ENCODE measurements at regions of chr17 and their contacts with region 1.

Region 1: DNA sequence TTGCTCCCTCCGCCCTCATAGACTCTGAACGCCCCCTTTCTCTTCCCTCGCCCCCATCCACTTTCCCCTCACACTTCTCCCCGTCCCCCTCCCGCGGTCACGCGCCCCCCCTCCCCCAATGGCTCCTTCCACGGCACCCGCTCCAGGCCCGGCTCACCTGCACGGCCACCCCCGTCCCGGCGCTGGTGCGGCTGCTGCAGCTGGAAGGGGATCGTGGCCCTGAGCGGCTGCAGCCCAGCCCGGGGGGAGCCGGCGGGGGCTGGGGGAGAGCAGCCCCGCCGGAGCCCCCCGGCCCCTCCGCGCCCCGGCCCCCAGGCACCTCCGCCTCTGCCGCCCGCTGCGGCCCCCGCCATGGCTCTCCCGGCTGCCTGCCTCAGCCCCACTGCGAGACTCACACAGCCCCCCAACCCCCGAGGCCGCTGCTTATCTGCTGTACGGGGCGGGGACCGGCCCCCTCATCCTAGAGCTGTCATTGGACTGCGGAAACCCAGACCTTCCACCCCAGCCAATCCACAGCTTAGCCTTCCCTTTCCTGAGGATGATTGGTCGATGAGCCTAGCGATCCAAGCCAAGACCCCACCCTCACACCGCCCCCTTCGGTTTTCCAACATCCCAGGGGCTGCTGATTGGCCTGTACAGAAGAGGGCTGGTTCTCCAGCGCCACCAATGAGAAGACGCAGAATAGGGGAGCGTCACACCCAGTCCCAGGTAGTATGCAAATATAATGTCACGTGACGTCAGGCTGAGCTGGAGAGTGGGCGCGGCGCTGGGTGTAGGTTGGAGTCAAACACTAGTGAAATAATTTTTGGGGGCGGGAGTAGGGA is at the start of gene FAM117A:
- DNase-seq: peak; percentile 100
- ATAC-seq: peak; percentile 98
- H3K4me3 ChIP-seq: peak within 1 kb of the TSS; percentile 73 to 97 (median 90)
- H3K27ac ChIP-seq: peak within 1 kb of the TSS; percentile 47
- H3K4me1 ChIP-seq: peaks cover 24% of the 10 kb centered on the region
- H3K27me3 ChIP-seq: no peaks in the 10 kb centered on the region
- CTCF ChIP-seq: no peak
- EP300 ChIP-seq: no peak
- POLR2A ChIP-seq: peak; percentile 93 to 97
- RAD21 ChIP-seq: no peak
- total RNA-seq, gene FAM117A: 12.1 and 12.3 TPM in 2 replicates

Region 2: DNA sequence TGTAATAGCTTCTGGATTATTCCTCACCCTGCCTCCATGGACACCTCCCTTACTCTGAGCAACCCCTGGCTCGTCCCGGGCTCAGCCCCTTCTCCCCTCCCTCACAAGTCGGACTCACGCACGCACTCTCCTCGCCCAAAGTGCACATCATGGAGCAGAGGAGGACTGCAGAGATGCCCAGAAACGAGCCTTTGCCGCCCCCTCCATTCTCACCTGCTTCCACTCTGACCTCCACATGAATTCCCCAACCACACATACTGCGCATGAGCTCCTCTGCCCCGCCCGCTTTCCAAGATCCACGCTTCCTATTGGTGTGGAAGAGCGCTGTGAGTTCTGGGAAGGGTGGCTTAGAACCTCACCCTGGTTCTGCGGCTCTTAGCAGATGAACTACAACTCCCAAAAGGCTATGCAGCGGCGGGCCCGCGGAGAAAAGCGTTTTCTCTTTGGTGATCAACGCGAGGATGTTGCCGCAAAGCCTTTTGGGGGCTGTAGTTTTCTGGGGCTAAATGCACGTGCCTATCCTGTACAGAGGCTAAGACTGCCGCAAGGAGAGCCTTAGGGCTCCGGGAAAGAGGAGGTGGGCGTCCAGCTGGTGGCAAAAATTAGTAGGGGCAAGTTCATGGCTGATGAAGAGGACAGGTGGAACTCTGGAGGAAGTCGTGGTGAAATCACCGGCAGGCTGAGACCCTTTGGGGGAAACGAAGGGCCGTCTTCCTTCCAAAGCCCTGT is 349.2 kb before region 1 on chr17 and contains the start of gene PHB1:
- CTCF ChIA-PET with region 1: no interaction called
- POLR2A ChIA-PET with region 1: interaction called, 12 read pairs
- in situ Hi-C with region 1: no loop called
- intact Hi-C with region 1: no loop called
- DNase-seq: peak; percentile 99
- ATAC-seq: peak; percentile 99
- H3K4me3 ChIP-seq: peak within 1 kb of the TSS; percentile 87 to 94 (median 92)
- H3K27ac ChIP-seq: peak within 1 kb of the TSS; percentile 63
- H3K4me1 ChIP-seq: peaks cover 55% of the 10 kb centered on the region
- H3K27me3 ChIP-seq: no peaks in the 10 kb centered on the region; a peak in 1 of 5 replicates
- CTCF ChIP-seq: no peak
- EP300 ChIP-seq: peak in 1 of 2 experiments; percentile 49; a peak in 1 of 4 replicates
- POLR2A ChIP-seq: peak; percentile 69 to 95
- RAD21 ChIP-seq: no peak
- total RNA-seq, gene PHB1: 515 and 623 TPM in 2 replicates

Region 3: DNA sequence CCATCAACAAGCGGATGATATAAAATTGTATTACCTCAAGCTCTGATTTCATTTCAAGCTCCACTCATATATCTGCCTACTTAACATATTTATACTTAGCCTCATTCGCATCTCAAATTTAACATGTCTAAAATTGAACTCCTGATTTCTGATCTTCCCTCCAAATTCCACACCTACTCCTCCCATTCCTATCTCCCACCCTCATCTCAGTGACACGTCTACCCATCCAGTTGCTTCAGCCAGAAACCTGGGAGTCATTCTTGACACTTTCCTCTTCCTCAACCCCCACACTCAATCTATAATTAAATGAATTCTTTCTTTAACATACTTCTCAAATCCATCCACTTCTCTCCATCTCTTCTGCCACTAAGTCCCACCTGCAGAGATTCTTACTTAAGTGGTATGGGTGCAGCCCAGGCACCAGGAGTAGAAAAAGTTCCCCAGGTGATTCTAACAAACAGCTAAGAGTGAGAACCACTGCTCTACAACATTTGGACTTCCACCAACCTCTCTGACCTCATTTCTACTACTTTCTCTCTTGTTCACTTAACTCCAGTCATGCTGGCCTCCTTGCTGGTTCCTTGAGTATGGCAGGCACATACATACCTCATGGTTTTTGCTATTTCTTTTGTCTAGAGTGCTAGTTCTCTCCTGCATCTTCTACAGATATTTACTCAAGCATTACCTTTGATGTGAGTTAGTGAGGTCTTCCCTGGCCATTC is 104.1 kb before region 1 on chr17:
- CTCF ChIA-PET with region 1: no interaction called
- POLR2A ChIA-PET with region 1: no interaction called
- in situ Hi-C with region 1: no loop called
- intact Hi-C with region 1: no loop called
- DNase-seq: no peak
- ATAC-seq: no peak
- H3K4me3 ChIP-seq: no peak overlapping the region
- H3K27ac ChIP-seq: no peak overlapping the region
- H3K4me1 ChIP-seq: no peaks in the 10 kb centered on the region
- H3K27me3 ChIP-seq: no peaks in the 10 kb centered on the region
- CTCF ChIP-seq: no peak
- EP300 ChIP-seq: no peak
- POLR2A ChIP-seq: no peak
- RAD21 ChIP-seq: no peak

Region 4: GRCh38 chr17:49677933-49678847 is 85.8 kb before region 1 on chr17 and contains the start of gene SPOP:
- CTCF ChIA-PET with region 1: no interaction called
- POLR2A ChIA-PET with region 1: interaction called, 14 read pairs
- in situ Hi-C with region 1: no loop called
- intact Hi-C with region 1: no loop called
- DNase-seq: peak; percentile 98
- ATAC-seq: peak; percentile 88
- H3K4me3 ChIP-seq: peak within 1 kb of the TSS; percentile 68 to 77 (median 74)
- H3K27ac ChIP-seq: peak within 1 kb of the TSS; percentile 73
- H3K4me1 ChIP-seq: peaks cover 49% of the 10 kb centered on the region
- H3K27me3 ChIP-seq: no peaks in the 10 kb centered on the region; a peak in 1 of 5 replicates
- CTCF ChIP-seq: peak; percentile 19; the same call in 1 of the 2 replicates
- EP300 ChIP-seq: no peak
- POLR2A ChIP-seq: peak; percentile 56 to 81
- RAD21 ChIP-seq: 0 out of 2 replicates have a peak, but pooled peaks have one; percentile 19
- total RNA-seq, gene SPOP: 60.8 and 79.4 TPM in 2 replicates

Region 5: GRCh38 chr17:49741009-49741691 is 22.8 kb before region 1 on chr17:
- CTCF ChIA-PET with region 1: no interaction called
- POLR2A ChIA-PET with region 1: interaction called, 83 read pairs
- in situ Hi-C with region 1: no loop called
- intact Hi-C with region 1: no loop called
- DNase-seq: no peak
- ATAC-seq: no peak
- H3K4me3 ChIP-seq: no peak overlapping the region
- H3K27ac ChIP-seq: no peak overlapping the region
- H3K4me1 ChIP-seq: peaks cover 27% of the 10 kb centered on the region
- H3K27me3 ChIP-seq: no peaks in the 10 kb centered on the region
- CTCF ChIP-seq: no peak
- EP300 ChIP-seq: no peak
- POLR2A ChIP-seq: no peak
- RAD21 ChIP-seq: no peak

Region 6: GRCh38 chr17:49748791-49749190 is 15.2 kb before region 1 on chr17:
- CTCF ChIA-PET with region 1: no interaction called
- POLR2A ChIA-PET with region 1: interaction called, 83 read pairs
- in situ Hi-C with region 1: no loop called
- intact Hi-C with region 1: no loop called
- DNase-seq: no peak
- ATAC-seq: no peak
- H3K4me3 ChIP-seq: no peak overlapping the region
- H3K27ac ChIP-seq: peak overlapping the region; percentile 2
- H3K4me1 ChIP-seq: peaks cover 46% of the 10 kb centered on the region
- H3K27me3 ChIP-seq: no peaks in the 10 kb centered on the region
- CTCF ChIP-seq: no peak
- EP300 ChIP-seq: no peak
- POLR2A ChIP-seq: no peak
- RAD21 ChIP-seq: no peak

Region 7: DNA sequence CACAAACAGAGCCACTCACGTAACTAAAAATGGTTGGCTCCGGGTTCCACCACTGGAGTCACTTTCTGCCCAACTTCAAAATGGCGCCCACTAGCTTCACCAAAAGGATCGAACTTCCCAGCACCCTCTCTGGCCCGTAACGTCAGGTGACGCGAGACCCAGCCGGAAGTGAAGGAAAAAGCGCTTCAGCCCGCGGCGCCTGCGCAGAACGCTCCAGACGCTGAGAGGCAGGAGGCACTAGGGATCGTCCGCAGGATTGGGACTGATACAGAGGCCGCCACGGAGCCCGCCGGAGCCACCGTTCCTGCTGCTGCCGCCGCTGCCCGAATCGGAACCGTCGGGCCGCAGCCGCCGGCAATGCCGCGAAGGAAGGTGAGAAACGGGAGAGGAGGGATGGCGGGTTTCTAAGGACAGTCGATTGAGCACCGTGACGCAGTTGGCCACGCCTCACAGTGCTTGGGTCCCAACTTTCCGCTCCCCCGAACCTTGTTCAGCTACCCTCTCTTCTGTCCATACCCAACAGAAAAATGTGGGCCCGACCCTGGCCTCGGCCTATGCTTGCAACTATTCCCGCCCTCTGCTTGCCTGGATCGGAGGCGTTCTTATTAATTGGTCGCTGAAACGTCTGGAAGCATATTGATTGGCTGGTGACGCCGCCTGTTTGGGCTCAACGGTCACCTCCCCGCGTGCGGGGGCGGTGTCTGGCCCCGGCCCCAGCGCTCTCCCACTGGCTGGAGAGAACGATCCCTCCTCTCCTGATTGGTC is 24.7 kb after region 1 on chr17 and contains the start of gene KAT7:
- CTCF ChIA-PET with region 1: no interaction called
- POLR2A ChIA-PET with region 1: interaction called, 63 read pairs
- in situ Hi-C with region 1: no loop called
- intact Hi-C with region 1: loop called (anchors 1 kb)
- DNase-seq: peak; percentile 99
- ATAC-seq: peak; percentile 98
- H3K4me3 ChIP-seq: peak within 1 kb of the TSS; percentile 82 to 100 (median 97)
- H3K27ac ChIP-seq: peak within 1 kb of the TSS; percentile 98
- H3K4me1 ChIP-seq: peaks cover 26% of the 10 kb centered on the region
- H3K27me3 ChIP-seq: no peaks in the 10 kb centered on the region
- CTCF ChIP-seq: no peak; the same call in 1 of the 2 replicates
- EP300 ChIP-seq: no peak; a peak in 1 of 4 replicates
- POLR2A ChIP-seq: peak; percentile 94 to 99
- RAD21 ChIP-seq: peak; percentile 47; the same call in 1 of the 2 replicates
- total RNA-seq, gene KAT7: 39.2 and 43.8 TPM in 2 replicates

Measured in HepG2 (cell line).